OCI-LY7 (cell line): ENCODE measurements at regions of chr14 and their contacts with region 1.

Region 1: DNA sequence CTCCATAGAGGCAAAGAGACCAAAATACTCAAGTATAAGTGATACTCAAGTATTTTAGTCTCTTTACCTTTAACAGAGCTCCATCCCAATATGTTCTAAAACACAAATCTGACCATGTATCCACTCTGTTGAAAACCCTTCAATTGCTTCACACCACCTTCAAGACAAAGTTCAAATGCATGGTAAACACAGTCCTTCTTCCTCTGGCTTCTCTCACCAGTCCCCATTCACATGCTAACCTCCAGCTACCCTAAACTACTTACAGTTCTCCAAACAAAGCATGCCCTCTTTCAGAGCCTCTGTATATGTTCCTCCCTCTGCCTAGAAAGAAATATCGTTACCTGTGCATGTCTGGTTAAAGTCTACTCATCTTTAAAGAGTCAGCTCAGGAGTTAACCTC is 100.2 kb downstream of the NUMB start:
- DNase-seq: no peak
- H3K4me3 ChIP-seq: no peak overlapping the region
- H3K27ac ChIP-seq: no peak overlapping the region
- H3K4me1 ChIP-seq: no peaks in the 10 kb centered on the region
- CTCF ChIP-seq: no peak

Region 2: DNA sequence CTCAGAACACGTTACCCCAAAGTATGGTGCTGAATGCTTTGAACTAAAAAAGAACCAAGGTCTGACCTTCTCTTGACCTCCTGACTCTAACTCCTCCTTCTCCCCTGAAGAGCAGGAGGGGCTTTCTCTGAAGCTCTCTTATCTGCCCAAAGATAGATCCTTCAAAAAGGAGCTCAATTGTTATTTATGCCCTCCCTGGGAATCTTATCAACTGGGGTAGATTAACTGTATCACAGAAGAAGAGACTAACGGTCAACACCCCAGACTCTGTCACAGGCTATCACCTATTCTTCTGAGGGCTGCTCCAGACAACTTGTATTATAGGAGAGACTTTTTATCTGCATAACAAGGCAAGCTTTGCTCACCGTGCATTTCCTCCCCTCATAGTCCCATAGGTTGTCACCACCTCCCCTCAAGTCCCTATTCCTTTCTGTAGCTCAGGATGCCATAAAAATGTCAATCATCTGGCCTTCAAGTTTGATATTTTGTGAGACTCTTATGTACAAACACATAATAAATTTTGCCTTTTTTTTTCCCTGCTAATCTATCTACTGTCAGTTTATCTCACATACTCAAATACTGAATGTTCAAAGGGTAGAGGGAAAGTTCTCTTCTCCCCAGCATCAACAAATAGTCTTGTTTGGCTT is 34.2 kb before region 1 on chr14:
- CTCF ChIA-PET with region 1: no interaction called
- POLR2A ChIA-PET with region 1: no interaction called
- intact Hi-C with region 1: loop called (anchors 5 kb)
- DNase-seq: no peak
- H3K4me3 ChIP-seq: no peak overlapping the region
- H3K27ac ChIP-seq: no peak overlapping the region
- H3K4me1 ChIP-seq: peaks cover 10% of the 10 kb centered on the region
- CTCF ChIP-seq: no peak